CD4-positive, alpha-beta memory T cell (primary cell): ENCODE measurements at regions of chr5 and their contacts with region 1.

Region 1: DNA sequence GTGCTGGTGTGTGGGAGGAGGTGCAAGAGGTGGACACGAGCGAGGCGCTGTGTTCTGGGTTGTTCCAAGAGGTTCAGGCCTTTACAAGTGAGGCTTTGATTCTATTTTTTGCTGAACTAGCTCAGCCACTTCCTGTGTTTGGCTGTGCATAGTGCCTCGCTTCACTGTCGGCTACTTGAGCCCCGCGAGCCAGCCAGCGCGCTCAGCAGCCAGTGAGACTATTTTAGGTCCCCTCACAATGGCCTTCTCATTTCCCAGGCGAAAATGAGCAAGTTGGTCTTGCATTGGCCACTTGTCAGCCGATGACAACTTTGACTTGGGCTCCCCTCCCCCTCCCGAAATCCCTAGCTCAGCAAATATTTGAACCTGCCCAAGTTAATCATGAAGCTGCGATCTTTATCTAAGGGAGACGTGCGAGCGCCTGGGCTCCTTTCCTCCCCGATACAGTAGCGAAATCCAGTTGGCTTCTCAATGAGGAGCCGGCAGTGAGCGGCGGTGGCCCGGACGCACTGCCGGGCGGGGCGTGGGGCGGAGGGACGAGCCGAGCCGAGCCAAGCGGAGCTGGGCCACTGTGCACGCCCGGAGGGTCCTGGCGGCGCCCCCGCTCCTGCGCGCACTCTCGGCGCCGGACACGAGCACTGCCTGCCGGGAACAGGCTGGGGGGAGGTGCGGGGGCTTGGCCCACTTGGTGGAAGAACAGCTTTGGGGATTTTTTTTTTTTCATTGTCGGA is 72.6 kb downstream of the PIK3R1 start:
- DNase-seq: peak; percentile 52 to 70 (median 62)
- H3K4me3 ChIP-seq: peak overlapping the region; percentile 55 to 64
- H3K4me3 Mint-ChIP-seq: peak overlapping the region; percentile 70 to 94 (median 91)
- H3K27ac ChIP-seq: peak overlapping the region; percentile 52
- H3K27ac Mint-ChIP-seq: peak overlapping the region; percentile 89 to 96 (median 94)
- H3K4me1 ChIP-seq: peaks cover 89% of the 10 kb centered on the region
- H3K4me1 Mint-ChIP-seq: peaks cover 75 to 94% (median 85%) of the 10 kb centered on the region in 4 donors
- H3K27me3 ChIP-seq: no peaks in the 10 kb centered on the region
- H3K27me3 Mint-ChIP-seq: no peaks in the 10 kb centered on the region

Region 2: GRCh38 chr5:68086857-68087256 is 201.3 kb before region 1 on chr5:
- CTCF ChIA-PET with region 1: no interaction called
- POLR2A ChIA-PET with region 1: no interaction called
- intact Hi-C with region 1: no loop called
- DNase-seq: no peak
- H3K4me3 ChIP-seq: no peak overlapping the region
- H3K4me3 Mint-ChIP-seq: no peak overlapping the region
- H3K27ac ChIP-seq: no peak overlapping the region
- H3K27ac Mint-ChIP-seq: no peak overlapping the region
- H3K4me1 ChIP-seq: no peaks in the 10 kb centered on the region
- H3K4me1 Mint-ChIP-seq: no peaks in the 10 kb centered on the region
- H3K27me3 ChIP-seq: no peaks in the 10 kb centered on the region
- H3K27me3 Mint-ChIP-seq: peaks cover 4 to 10% of the 10 kb centered on the region in 2 donors

Region 3: DNA sequence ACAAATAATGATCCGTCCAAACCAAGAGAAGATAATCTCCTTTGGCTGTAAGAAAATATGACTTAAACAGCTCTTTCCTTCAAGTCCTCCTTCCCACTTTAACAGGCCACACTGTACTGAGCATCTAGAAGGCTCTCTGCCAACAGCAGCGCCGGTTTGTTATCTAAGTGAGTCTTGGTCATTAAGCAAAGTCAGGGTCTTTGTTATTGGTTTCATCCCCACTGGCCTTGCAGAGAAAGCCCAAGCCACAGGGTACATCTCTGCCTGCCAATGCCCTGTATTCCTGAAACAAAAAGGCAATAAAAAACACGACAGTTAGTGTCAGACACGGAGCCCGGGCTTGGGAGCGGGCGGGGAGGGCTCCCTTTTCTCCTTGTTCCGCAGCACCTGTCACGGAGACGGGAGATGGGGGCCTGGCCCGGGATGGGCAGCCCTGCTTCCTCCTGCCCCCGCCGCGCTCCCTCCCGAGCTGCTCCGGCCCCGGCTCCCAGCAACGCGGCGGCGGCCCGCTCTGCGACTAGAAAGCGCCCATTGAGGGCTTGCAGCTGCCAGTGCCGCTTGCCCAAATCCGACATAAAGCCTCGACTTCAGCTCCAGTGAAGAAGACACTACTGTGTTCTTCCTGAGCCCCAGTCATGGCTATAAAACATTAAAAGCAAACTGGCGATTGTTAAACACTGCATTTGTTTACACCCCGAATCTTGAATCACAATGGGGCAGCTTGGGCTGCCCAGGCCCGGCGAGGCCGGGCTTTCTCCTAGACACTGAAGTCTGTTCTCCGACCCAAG is 100.7 kb before region 1 on chr5:
- CTCF ChIA-PET with region 1: no interaction called
- POLR2A ChIA-PET with region 1: no interaction called
- intact Hi-C with region 1: no loop called
- DNase-seq: no peak
- H3K4me3 ChIP-seq: no peak overlapping the region
- H3K4me3 Mint-ChIP-seq: no peak overlapping the region
- H3K27ac ChIP-seq: no peak overlapping the region
- H3K27ac Mint-ChIP-seq: no peak overlapping the region
- H3K4me1 ChIP-seq: no peaks in the 10 kb centered on the region
- H3K4me1 Mint-ChIP-seq: peaks cover 1 to 5% (median 4%) of the 10 kb centered on the region in 4 donors
- H3K27me3 ChIP-seq: no peaks in the 10 kb centered on the region
- H3K27me3 Mint-ChIP-seq: peaks cover 2% of the 10 kb centered on the region in 2 donors

Region 4: DNA sequence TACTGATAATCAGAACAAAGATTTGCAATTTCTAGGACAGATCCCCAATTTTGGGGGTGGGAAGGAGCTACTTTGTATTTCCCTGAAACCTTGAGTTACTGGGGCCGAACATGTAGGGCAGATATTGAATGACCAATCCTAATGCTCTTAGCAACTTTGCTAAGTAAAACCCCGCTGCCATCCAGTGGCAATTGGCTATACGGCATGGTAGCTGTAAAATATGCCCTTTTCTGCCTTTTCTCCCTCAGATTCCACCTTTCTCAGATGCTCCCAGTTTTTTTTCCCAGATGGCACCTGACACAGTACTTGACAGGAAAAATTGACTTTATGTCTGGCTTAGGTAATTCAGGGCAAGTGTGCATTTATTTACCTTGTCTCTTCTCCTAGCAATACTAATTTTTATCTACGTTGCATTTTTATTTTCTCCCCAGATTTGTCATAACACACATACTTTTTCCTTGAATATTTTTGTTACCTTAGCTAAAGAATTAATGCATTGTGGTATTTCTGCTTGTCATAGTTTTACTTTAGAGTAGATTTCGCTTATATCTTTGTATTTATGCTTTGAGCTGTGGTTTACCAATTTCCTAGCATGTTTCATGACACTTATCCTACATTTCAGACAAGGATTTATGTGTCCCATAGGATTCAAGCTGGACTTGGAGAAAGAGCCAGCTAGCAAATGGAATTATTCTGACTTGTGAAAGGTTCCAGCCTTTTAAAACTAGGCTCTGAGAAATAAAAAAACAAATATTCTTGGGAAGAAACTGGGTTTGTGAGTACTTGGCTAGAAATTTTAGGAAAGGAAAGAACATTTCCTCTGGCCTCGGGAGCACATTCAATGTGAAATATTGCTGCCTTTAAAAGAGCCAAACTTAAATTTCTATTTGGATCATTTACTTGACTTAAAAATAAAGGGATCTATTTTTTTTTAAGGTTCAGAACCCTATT is 35.2 kb before region 1 on chr5:
- CTCF ChIA-PET with region 1: interaction called, 29 read pairs
- POLR2A ChIA-PET with region 1: interaction called, 35 read pairs
- intact Hi-C with region 1: no loop called
- DNase-seq: peak in 3 of 5 donors; percentile 36 to 41 (median 38)
- H3K4me3 ChIP-seq: no peak overlapping the region
- H3K4me3 Mint-ChIP-seq: peak overlapping the region in 2 of 8 donors; percentile 52 to 66
- H3K27ac ChIP-seq: no peak overlapping the region
- H3K27ac Mint-ChIP-seq: peak overlapping the region in 5 of 7 donors; percentile 1 to 93 (median 62)
- H3K4me1 ChIP-seq: peaks cover 95% of the 10 kb centered on the region
- H3K4me1 Mint-ChIP-seq: peaks cover 79 to 97% (median 90%) of the 10 kb centered on the region in 4 donors
- H3K27me3 ChIP-seq: no peaks in the 10 kb centered on the region
- H3K27me3 Mint-ChIP-seq: no peaks in the 10 kb centered on the region

Region 5: DNA sequence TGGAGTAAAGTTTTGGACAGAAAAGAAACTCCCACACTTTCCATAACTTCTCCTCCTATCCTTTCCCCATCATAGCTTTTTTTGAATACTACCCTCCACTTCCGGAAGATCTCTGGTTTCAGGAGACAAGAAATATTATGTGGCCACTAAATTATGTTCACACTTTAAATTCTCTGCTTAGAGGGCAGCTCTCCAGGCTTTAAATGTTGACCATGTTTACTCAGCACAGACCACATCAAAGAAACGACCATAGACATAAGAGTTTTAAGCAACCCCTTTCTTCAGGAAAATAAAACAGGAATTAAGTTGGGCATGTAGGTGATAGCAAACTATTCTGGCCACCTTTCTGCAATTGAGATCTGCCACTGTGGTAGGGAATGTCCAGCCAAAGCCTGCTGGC is 25.2 kb after region 1 on chr5:
- CTCF ChIA-PET with region 1: interaction called, 20 read pairs
- POLR2A ChIA-PET with region 1: no interaction called
- intact Hi-C with region 1: no loop called
- DNase-seq: no peak
- H3K4me3 ChIP-seq: no peak overlapping the region
- H3K4me3 Mint-ChIP-seq: no peak overlapping the region
- H3K27ac ChIP-seq: no peak overlapping the region
- H3K27ac Mint-ChIP-seq: no peak overlapping the region
- H3K4me1 ChIP-seq: peaks cover 10% of the 10 kb centered on the region
- H3K4me1 Mint-ChIP-seq: peaks cover 10 to 18% (median 12%) of the 10 kb centered on the region in 4 donors
- H3K27me3 ChIP-seq: no peaks in the 10 kb centered on the region
- H3K27me3 Mint-ChIP-seq: no peaks in the 10 kb centered on the region

Region 6: GRCh38 chr5:68331192-68332079 is 43.3 kb after region 1 on chr5:
- CTCF ChIA-PET with region 1: no interaction called
- POLR2A ChIA-PET with region 1: no interaction called
- intact Hi-C with region 1: no loop called
- DNase-seq: no peak
- H3K4me3 ChIP-seq: no peak overlapping the region
- H3K4me3 Mint-ChIP-seq: no peak overlapping the region
- H3K27ac ChIP-seq: no peak overlapping the region
- H3K27ac Mint-ChIP-seq: peak overlapping the region in 1 of 7 donors; percentile 53
- H3K4me1 ChIP-seq: no peaks in the 10 kb centered on the region
- H3K4me1 Mint-ChIP-seq: peaks cover 0 to 7% (median 0%) of the 10 kb centered on the region in 4 donors
- H3K27me3 ChIP-seq: no peaks in the 10 kb centered on the region
- H3K27me3 Mint-ChIP-seq: peaks cover 7% of the 10 kb centered on the region in 2 donors

Region 7: GRCh38 chr5:68433923-68434879 is 146.1 kb after region 1 on chr5:
- CTCF ChIA-PET with region 1: interaction called, 9 read pairs
- POLR2A ChIA-PET with region 1: interaction called, 11 read pairs
- intact Hi-C with region 1: loop called (anchors 1 kb)
- DNase-seq: peak; percentile 76 to 98 (median 83)
- H3K4me3 ChIP-seq: peak overlapping the region; percentile 7 to 42
- H3K4me3 Mint-ChIP-seq: peak overlapping the region; percentile 73 to 89 (median 80)
- H3K27ac ChIP-seq: peak overlapping the region; percentile 54
- H3K27ac Mint-ChIP-seq: peak overlapping the region; percentile 88 to 95 (median 91)
- H3K4me1 ChIP-seq: peaks cover 40% of the 10 kb centered on the region
- H3K4me1 Mint-ChIP-seq: peaks cover 29 to 39% (median 36%) of the 10 kb centered on the region in 4 donors
- H3K27me3 ChIP-seq: no peaks in the 10 kb centered on the region
- H3K27me3 Mint-ChIP-seq: no peaks in the 10 kb centered on the region

Region 8: GRCh38 chr5:68740204-68740910 is 452.2 kb after region 1 on chr5:
- CTCF ChIA-PET with region 1: no interaction called
- POLR2A ChIA-PET with region 1: no interaction called
- intact Hi-C with region 1: no loop called
- DNase-seq: no peak
- H3K4me3 ChIP-seq: no peak overlapping the region
- H3K4me3 Mint-ChIP-seq: no peak overlapping the region
- H3K27ac ChIP-seq: no peak overlapping the region
- H3K27ac Mint-ChIP-seq: no peak overlapping the region
- H3K4me1 ChIP-seq: no peaks in the 10 kb centered on the region
- H3K4me1 Mint-ChIP-seq: peaks cover 0 to 3% (median under 1%) of the 10 kb centered on the region in 4 donors
- H3K27me3 ChIP-seq: no peaks in the 10 kb centered on the region
- H3K27me3 Mint-ChIP-seq: peaks cover 0 to 1% of the 10 kb centered on the region in 2 donors

Region 9: DNA sequence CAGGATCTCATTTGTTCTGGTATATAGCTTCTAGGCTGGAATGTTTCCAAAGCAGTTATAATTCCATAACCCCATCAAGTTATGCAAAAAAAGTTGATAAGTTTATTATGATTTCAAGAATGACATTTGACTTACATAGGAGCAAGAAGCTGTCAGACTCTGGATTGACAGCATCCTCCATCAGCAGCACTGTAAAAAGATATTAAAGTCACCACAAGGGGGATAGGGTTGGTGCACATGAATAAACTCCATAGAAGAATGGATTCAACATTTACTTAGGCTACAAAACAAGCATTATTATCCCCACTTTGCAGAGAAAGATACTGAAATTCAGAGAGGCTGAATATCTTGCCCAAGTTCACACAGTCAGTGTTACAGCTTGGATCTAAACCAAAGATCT is 596.7 kb after region 1 on chr5:
- CTCF ChIA-PET with region 1: interaction called, 3 read pairs
- POLR2A ChIA-PET with region 1: no interaction called
- intact Hi-C with region 1: loop called (anchors 10 kb)
- DNase-seq: peak in 1 of 5 donors; percentile 4
- H3K4me3 ChIP-seq: no peak overlapping the region
- H3K4me3 Mint-ChIP-seq: no peak overlapping the region
- H3K27ac ChIP-seq: no peak overlapping the region
- H3K27ac Mint-ChIP-seq: no peak overlapping the region
- H3K4me1 ChIP-seq: peaks cover 17% of the 10 kb centered on the region
- H3K4me1 Mint-ChIP-seq: peaks cover 25 to 32% (median 27%) of the 10 kb centered on the region in 4 donors
- H3K27me3 ChIP-seq: no peaks in the 10 kb centered on the region
- H3K27me3 Mint-ChIP-seq: no peaks in the 10 kb centered on the region